Heart right ventricle (tissue), 16 donors: ENCODE measurements at regions of chr4 and their contacts with region 1.

Region 1: DNA sequence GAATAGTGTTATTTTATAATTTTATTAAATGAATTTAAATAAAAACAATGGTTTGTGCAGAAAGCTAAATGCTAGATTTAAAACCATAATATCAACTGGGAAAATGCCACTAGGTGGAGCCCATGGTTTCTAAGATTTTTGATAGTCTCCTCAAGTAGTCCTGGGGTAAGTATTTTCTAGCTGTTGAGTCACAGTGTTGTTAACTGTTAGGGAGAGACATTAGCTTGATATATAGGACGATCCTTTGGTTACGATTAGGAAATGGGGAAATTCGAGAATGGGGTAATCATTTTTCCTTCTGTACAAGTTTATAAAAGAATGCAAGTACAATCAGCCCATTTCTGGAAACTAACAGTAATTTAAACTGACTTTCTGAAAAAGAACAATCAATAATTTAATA is 378.4 kb downstream of the ANKRD50 start:
- DNase-seq: peak in 1 of 2 donors; percentile 56
- ATAC-seq: peak in 7 of 8 donors; percentile 49 to 67 (median 62)
- H3K4me3 ChIP-seq: no peak overlapping the region
- H3K27ac ChIP-seq: no peak overlapping the region
- H3K4me1 ChIP-seq: peaks cover 0 to 4% (median 0%) of the 10 kb centered on the region in 9 donors
- H3K27me3 ChIP-seq: no peaks in the 10 kb centered on the region
- CTCF ChIP-seq: peak; percentile 34 to 83 (median 65)

Region 2: DNA sequence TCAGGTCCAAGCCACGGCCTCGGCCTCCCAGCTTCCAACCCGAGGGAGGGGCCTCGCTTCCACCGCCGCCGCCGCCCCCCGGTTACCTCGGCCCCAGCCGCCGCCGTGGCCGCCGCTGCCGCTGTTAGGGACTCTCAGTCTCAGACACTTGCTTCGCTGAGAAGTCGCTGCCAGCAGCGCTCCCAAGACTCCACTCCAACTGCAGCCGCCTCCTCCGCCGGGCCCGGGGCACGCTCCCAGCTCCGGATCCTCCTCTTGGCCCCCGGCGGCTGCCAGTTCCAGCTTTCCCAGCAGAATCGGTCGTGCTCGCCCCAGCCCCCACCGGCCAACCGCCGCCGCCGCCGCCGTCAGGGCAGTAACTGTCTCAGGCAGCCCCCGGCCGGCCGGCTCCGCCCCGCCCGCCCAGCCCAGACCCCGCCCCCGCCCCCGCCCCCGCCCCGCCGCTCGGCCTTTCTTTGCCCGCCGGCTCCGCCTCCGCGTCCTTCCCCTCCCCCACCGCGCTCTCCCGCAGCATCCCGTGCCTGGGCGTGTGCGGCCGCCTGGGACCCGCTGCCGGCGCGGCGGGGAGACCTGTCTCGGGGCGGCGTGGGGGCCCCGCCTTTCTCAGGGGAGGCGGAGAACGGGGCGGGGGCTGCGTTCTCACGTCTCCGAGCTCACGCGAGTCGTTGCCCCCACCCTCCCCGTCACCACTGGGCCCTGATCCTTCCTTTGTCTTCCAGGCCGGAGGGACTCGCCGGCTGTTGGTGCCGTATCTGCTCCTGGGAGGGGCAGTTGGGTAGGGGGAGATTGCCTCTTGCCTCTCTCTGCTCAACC is 378.5 kb after region 1 on chr4 and contains the start of gene ANKRD50:
- intact Hi-C with region 1: loop called in 3 of 10 experiments (anchors 10 kb)
- DNase-seq: peak; percentile 92
- ATAC-seq: peak; percentile 88 to 98 (median 92)
- H3K4me3 ChIP-seq: peak within 1 kb of the TSS; percentile 72 to 93 (median 88)
- H3K27ac ChIP-seq: peak within 1 kb of the TSS; percentile 84 to 99 (median 97)
- H3K4me1 ChIP-seq: peaks cover 0 to 47% (median 20%) of the 10 kb centered on the region in 9 donors
- H3K27me3 ChIP-seq: no peaks in the 10 kb centered on the region
- CTCF ChIP-seq: no peak
- total RNA-seq, gene ANKRD50: 5.2 to 20.1 (median 8.5) TPM

Region 3: DNA sequence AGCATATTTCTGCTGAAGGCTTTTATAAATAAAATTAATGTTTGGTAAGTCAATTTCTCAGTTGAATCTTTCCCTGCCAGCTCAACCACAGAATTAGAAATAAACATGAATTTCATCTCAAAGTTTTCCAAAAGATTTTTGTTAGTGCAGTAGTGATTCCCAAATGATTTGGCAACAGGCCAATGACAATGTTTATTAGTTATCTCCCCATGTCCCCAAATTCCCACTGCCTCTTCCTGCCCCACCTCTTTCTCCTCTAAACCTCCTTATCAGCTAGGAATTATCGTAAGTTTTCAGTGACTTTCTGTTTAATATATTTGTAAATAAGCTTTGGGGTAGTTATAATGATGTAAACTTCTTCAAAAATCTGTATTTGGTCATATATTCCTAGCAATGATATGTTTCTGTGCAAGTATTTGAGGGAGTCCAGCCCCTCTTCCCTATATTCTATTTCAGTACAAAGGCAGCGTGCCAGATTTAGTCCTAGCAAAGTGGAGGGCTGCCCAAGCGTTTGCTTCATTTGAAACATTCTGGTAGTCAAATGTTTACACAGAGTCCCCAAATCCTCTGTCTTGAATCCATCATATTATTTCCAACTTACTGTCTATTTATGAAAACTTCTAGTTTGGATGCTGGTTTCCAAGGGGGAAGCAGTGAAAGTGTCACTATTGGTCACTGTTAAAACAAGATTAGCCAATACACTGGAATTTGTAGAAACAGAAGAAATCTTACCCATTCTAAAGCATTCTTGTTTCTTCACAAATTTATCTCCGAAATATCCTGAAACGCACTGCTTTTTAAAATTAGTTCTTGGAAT is 412.1 kb after region 1 on chr4:
- intact Hi-C with region 1: loop called in 1 of 10 experiments (anchors 10 kb)
- DNase-seq: peak in 1 of 2 donors; percentile 6
- ATAC-seq: peak in 5 of 8 donors; percentile 29 to 69 (median 39)
- H3K4me3 ChIP-seq: peak overlapping the region in 6 of 10 donors; percentile 3 to 30 (median 27)
- H3K27ac ChIP-seq: peak overlapping the region in 3 of 10 donors; percentile 1 to 29 (median 13)
- H3K4me1 ChIP-seq: peaks cover 0 to 14% (median 0%) of the 10 kb centered on the region in 9 donors
- H3K27me3 ChIP-seq: no peaks in the 10 kb centered on the region
- CTCF ChIP-seq: no peak

Region 4: DNA sequence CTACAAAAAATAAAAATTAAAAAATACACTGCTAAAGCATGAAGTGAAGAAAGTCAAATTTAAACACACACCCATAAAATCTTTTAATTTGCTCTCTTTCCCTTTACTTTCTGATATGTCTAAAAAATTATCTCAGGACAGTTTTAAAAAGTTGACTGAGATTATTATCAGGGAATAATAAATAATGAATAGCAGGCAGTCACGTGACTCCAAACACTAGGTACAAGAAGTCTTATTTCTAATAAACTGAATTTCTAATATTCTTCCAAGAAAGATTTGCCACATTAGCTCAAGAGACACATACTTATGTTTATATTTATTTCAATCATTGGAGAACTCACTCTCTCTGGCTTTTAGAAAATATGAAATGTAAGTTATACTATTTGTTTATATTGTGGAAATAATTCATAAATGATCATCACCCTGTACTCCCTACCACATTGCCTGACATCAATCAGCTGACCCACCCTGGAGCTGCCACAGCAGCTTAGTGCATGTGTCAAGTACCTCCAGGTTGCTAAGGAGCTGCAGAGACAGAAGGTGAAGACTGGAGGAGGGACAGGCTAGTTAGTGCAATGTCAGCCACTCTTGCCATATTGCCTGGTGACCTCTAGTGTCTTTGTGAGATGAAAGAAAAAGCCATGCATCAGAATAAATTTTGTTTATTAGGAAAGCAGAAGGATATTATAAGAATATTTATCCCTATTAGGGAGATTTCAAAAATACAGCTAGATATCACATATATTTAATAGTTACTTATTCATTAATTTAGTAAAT is 736.6 kb after region 1 on chr4:
- intact Hi-C with region 1: loop called in 1 of 10 experiments (anchors 10 kb)
- DNase-seq: no peak
- ATAC-seq: no peak
- H3K4me3 ChIP-seq: no peak overlapping the region
- H3K27ac ChIP-seq: no peak overlapping the region
- H3K4me1 ChIP-seq: peaks cover 0 to 4% (median 0%) of the 10 kb centered on the region in 9 donors
- H3K27me3 ChIP-seq: no peaks in the 10 kb centered on the region
- CTCF ChIP-seq: peak in 3 of 9 donors; percentile 8 to 19 (median 12)

Region 5: DNA sequence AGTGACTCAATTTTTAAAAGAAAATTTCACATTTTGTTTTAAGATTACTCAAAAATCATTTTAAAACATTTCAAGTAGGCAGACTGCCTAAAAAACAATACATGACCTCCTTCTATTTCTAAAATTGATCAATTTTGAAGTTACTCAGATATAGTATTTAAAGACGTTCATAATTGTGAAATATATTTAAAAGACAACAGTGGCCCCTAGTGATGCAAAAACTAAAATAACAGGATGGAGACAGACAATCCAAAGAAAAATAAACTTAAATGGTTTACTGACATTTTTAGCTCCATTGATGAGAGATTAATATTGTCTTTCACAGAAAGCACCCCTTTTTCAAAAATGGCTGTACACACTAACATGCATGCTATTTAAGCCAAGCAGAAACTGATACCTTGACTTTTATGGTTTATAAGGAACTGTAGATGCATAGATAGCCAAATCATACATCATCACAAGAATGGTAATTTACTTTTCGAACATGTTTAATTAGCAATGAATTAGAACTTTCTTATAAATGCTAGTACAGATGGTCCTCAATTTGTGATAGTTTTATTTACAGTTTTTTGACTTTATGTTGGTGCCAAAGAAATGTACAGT is 910.8 kb after region 1 on chr4:
- intact Hi-C with region 1: loop called (anchors 2 to 5 kb)
- DNase-seq: no peak
- ATAC-seq: no peak
- H3K4me3 ChIP-seq: no peak overlapping the region
- H3K27ac ChIP-seq: no peak overlapping the region
- H3K4me1 ChIP-seq: no peaks in the 10 kb centered on the region
- H3K27me3 ChIP-seq: no peaks in the 10 kb centered on the region
- CTCF ChIP-seq: peak in 7 of 9 donors; percentile 35 to 67 (median 55)

Region 6: GRCh38 chr4:125283707-125284279 is 949.7 kb after region 1 on chr4:
- intact Hi-C with region 1: loop called in 7 of 10 experiments (anchors 1 to 10 kb)
- DNase-seq: no peak
- ATAC-seq: no peak
- H3K4me3 ChIP-seq: no peak overlapping the region
- H3K27ac ChIP-seq: no peak overlapping the region
- H3K4me1 ChIP-seq: no peaks in the 10 kb centered on the region
- H3K27me3 ChIP-seq: no peaks in the 10 kb centered on the region
- CTCF ChIP-seq: peak; percentile 33 to 75 (median 59)